ENCODE measurements at regions of chr12 and their contacts with region 1.

Region 1: DNA sequence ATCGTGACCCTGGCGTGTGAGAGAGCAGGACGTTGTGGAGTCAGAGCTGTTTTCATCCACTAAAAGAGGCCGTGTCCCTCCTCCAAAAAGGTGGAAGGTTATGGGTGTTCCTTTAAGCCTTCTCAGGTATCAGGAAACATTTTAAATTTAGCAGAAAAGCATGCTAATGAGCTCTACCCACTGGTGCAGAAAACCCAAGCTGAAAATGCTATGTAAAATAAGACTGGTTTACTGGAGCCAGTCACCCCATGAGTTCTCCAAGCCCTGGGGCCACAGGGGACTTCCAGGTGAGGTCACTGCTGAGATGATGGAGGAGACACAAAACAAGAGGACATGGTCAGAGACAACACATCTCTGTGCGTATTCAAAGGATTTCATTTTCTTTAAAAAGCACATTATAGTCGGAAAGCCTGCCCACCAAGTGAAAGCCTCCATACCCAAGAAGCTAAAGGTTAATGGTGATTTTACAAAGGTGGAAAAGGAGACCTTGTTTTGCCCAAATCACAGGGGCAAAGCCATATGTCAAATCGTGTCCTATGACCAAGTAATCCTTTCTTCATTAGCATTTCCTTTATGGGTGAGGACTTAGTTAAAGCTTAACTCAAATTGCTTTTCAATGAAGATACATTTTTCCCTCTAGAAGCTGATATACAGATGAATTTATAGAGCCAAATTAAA is 14.2 kb downstream of the PRKAB1 start:
- DNase-seq: no peak
- H3K4me3 ChIP-seq: no peak overlapping the region
- CTCF ChIP-seq: no peak

Region 2: GRCh38 chr12:119667577-119668323 is 14.3 kb before region 1 on chr12 and contains the start of gene PRKAB1:
- CTCF ChIA-PET with region 1: interaction called, 14 read pairs
- POLR2A ChIA-PET with region 1: no interaction called
- DNase-seq: peak; percentile 73
- H3K4me3 ChIP-seq: peak within 1 kb of the TSS; percentile 99
- CTCF ChIP-seq: peak; percentile 94

Region 3: DNA sequence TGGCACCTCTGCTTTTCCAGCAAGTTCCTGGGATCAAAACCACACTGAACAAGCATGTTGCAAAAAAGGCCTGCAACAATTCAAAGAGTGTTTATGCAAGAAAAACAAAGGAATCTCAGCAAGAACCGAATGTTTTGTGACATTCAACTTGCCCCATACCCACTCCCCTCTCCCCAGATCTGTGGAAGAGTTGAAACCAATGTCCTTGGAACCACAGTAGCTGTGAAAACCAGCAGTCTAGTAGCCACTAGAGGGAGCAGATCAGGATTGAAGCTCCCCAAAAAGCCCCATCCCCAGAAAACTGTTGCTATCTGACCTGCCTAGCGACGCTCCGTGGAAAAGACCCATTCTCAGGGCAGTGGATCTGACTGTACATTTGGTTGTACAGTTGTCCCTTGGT is 12.9 kb after region 1 on chr12:
- CTCF ChIA-PET with region 1: interaction called, 13 read pairs
- POLR2A ChIA-PET with region 1: no interaction called
- DNase-seq: no peak
- H3K4me3 ChIP-seq: no peak overlapping the region
- CTCF ChIP-seq: peak; percentile 34

Region 4: GRCh38 chr12:119772431-119772830 is 90.3 kb after region 1 on chr12:
- CTCF ChIA-PET with region 1: no interaction called
- POLR2A ChIA-PET with region 1: no interaction called
- DNase-seq: no peak
- H3K4me3 ChIP-seq: no peak overlapping the region
- CTCF ChIP-seq: no peak

Region 5: GRCh38 chr12:120194534-120195395 is 512.7 kb after region 1 on chr12 and contains the start of gene GCN1:
- CTCF ChIA-PET with region 1: no interaction called
- POLR2A ChIA-PET with region 1: no interaction called
- DNase-seq: no peak
- H3K4me3 ChIP-seq: peak within 1 kb of the TSS; percentile 84
- CTCF ChIP-seq: no peak

Measured in AG04449 (cell line).